Lower leg skin (tissue), 4 donors: ENCODE measurements at regions of chr6 and their contacts with region 1.

Region 1: DNA sequence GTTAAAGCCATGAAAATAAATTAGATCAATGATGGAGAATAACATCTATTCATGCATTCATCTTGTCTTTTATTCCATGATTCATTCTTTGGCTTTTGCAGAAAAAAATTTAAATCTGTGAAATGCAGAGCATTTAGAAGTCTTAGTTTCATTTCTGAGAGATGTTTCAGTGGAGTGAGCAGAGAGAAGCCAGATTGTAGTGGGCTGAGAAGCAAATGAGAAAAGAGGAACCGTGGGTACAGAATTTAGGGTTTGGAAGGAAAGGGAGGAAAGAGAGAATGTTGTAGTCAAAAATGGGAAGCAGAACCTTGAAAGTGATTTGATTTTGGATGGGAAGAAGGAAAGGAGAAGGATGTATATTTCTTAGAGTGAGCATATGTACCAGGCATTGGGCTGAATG is 260.3 kb upstream of the MAN1A1 start:
- DNase-seq: no peak
- H3K4me3 ChIP-seq: no peak overlapping the region
- CTCF ChIP-seq: no peak
- POLR2A ChIP-seq: no peak

Region 2: DNA sequence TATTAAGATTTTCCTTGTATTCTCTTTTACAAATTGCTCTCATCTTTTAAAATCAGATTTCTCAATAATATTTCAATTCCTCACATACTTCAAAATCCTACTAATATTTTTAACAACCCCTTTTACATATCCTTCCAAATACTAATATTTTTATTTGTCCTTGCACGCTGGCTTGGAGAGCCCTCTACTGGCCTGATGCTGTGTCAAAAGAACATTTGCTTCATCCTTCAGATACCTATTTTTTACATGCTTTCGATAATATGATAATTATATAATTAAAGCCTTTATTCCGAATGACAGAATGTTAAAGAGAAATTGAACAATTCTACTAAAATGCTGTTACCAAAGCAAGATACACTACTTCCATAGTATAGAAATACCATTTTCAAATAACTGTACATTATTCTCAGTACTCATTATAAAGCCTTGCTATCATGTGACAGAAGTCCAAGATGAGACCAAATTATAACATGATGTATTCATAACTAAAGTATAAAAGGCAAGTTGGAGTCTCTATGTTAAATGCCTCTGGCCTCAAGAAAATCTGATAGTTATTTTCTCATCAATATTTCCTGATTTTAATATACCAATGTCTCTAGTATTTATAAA is 1100.8 kb before region 1 on chr6:
- intact Hi-C with region 1: no loop called
- DNase-seq: no peak
- H3K4me3 ChIP-seq: no peak overlapping the region
- CTCF ChIP-seq: no peak
- POLR2A ChIP-seq: no peak

Region 3: DNA sequence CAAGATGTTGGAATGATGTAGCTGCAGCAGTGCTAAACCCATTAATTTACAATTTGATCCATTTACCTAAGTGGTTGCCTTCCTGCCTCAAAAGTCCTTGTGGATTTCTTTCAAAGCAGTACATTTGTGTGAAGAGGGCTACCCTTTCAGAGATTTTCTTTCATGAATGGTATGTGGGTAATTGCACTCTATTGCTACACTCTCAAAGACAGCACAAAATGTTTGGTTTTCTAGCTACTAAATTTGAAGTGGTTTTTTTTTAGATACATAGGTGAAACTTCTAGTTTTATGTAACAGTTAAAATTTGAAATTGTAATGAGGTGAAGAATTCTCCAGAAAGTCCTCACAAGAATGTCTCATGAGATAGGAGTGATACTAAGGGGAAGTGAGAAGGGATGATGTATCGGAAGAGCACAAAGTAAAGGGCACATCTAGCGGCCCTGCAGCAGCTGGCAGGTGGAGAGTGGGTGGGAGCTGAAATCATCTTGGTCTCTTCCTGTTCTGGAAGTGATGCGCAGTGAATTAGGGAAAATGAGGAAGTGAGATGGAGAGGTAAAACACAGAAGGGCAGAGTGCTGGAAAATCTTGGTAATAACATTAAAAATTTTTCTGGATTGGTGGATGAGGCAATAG is 23.5 kb before region 1 on chr6:
- intact Hi-C with region 1: loop called (anchors 2 kb)
- DNase-seq: no peak
- H3K4me3 ChIP-seq: no peak overlapping the region
- CTCF ChIP-seq: no peak
- POLR2A ChIP-seq: no peak